Psoas muscle (tissue), 8 donors: ENCODE measurements at regions of chrX and their contacts with region 1.

Region 1: GRCh38 chrX:25015486-25016360 is at the start of gene ARX:
- DNase-seq: peak; percentile 68 to 88
- ATAC-seq: peak; percentile 80 to 87 (median 84)
- H3K4me3 ChIP-seq: peak within 1 kb of the TSS; percentile 66
- H3K27ac ChIP-seq: peak within 1 kb of the TSS; percentile 69
- H3K4me1 ChIP-seq: peaks cover 5% of the 10 kb centered on the region
- H3K27me3 ChIP-seq: peaks cover 0 to 94% (median 11%) of the 10 kb centered on the region in 3 donors
- CTCF ChIP-seq: no peak
- total RNA-seq, gene ARX: 2.7 to 12.8 (median 3.9) TPM

Region 2: DNA sequence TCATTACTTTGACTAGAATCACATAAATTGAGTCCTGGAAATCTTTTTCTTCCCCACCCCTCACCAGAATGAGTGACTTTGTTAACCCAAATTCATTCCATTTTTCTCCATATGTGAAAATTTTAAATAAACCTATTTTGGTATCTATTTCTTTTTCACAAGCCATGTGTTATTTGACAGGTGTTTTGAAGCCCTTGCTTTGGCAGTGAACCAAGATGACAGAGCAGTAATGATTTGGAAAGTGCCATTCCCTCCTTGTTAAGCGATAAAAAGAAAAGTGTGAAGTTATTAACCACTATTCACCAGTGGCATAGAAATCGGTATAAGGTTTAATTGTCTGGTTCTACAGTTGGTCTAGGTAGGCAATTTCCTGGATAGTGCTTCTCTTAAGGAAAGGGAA is 255.9 kb before region 1 on chrX:
- intact Hi-C with region 1: loop called in 1 of 2 experiments (anchors 10 kb)
- DNase-seq: no peak
- ATAC-seq: no peak
- H3K4me3 ChIP-seq: no peak overlapping the region
- H3K27ac ChIP-seq: peak overlapping the region; percentile 76
- H3K4me1 ChIP-seq: peaks cover 7% of the 10 kb centered on the region
- H3K27me3 ChIP-seq: no peaks in the 10 kb centered on the region
- CTCF ChIP-seq: no peak

Region 3: GRCh38 chrX:24838629-24839028 is 177.1 kb before region 1 on chrX:
- intact Hi-C with region 1: loop called in 1 of 2 experiments (anchors 10 kb)
- DNase-seq: no peak
- ATAC-seq: peak in 3 of 4 donors; percentile 67 to 88 (median 72)
- H3K4me3 ChIP-seq: no peak overlapping the region
- H3K27ac ChIP-seq: peak overlapping the region; percentile 60
- H3K4me1 ChIP-seq: peaks cover 6% of the 10 kb centered on the region
- H3K27me3 ChIP-seq: no peaks in the 10 kb centered on the region
- CTCF ChIP-seq: peak; percentile 56